PC-9 (cell line): ENCODE measurements at regions of chr10 and their contacts with region 1.

Region 1: DNA sequence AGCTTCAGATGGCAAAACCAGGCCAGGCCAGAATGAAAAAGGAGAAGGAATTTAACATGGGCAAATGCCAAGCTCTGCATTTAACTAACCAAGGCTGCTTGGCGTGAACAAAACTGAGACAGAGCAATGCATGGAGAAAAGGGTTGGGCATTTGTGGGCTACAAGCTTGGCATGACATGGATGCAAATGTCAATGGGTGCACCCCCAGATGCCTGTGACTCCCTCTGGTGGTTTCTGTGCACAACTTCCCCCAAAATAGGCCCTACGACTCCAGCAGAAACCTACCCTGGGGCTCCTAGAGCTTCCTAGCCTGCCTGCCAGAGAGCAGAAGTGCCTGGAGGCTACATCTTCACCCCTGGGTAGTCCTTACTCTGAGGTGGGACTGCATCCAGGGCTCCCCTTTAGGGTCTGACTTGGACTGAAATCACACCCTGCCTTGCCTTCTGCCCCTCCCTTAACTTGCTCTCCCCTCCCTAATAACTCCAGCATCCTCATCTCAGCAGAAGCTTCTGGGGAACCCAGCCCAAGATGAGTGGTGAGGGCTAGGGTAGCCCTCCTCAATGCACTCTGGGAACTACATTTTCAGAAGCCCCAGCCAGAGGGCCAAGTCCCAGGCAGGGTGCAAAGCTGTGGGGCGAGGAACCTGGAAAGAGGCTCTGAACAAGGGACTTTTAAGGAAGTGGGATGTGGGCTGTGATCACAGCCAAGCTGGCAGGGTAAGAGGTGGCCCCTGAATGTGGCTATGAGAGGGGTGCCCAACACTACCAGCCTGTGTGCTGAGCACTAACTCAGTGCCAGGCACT is 11.3 kb downstream of the GPRIN2 start:
- DNase-seq: peak; percentile 74 to 79
- H3K4me3 ChIP-seq: no peak overlapping the region
- H3K27ac ChIP-seq: peak overlapping the region; percentile 57
- H3K4me1 ChIP-seq: peaks cover 26% of the 10 kb centered on the region
- H3K27me3 ChIP-seq: no peaks in the 10 kb centered on the region
- CTCF ChIP-seq: peak; percentile 77

Region 2: GRCh38 chr10:46528171-46528671 is 17.0 kb before region 1 on chr10:
- CTCF ChIA-PET with region 1: interaction called, 6 read pairs
- POLR2A ChIA-PET with region 1: interaction called, 7 read pairs
- intact Hi-C with region 1: loop called (anchors 2 kb)
- DNase-seq: no peak
- H3K4me3 ChIP-seq: no peak overlapping the region
- H3K27ac ChIP-seq: no peak overlapping the region
- H3K4me1 ChIP-seq: peaks cover 29% of the 10 kb centered on the region
- H3K27me3 ChIP-seq: no peaks in the 10 kb centered on the region
- CTCF ChIP-seq: no peak

Region 3: GRCh38 chr10:46556515-46557315 is 11.5 kb after region 1 on chr10 and contains the start of gene GPRIN2:
- CTCF ChIA-PET with region 1: interaction called, 6 read pairs
- POLR2A ChIA-PET with region 1: no interaction called
- intact Hi-C with region 1: loop called (anchors 1 kb)
- DNase-seq: peak; percentile 33 to 58
- H3K4me3 ChIP-seq: peak within 1 kb of the TSS; percentile 44; the same call in 1 of the 2 replicates
- H3K27ac ChIP-seq: no peak within 1 kb of the TSS
- H3K4me1 ChIP-seq: peaks cover 6% of the 10 kb centered on the region; the same call in 1 of the 2 replicates
- H3K27me3 ChIP-seq: no peaks in the 10 kb centered on the region
- CTCF ChIP-seq: no peak
- total RNA-seq, gene GPRIN2: 33.1 and 53.6 TPM in 2 replicates